ENCODE measurements at regions of chr10 and their contacts with region 1.

Region 1: GRCh38 chr10:95430231-95430951 is 130.8 kb downstream of the SORBS1 start:
- DNase-seq: peak; percentile 50
- H3K4me3 Mint-ChIP-seq: no peak overlapping the region
- H3K27ac Mint-ChIP-seq: no peak overlapping the region
- H3K4me1 Mint-ChIP-seq: no peaks in the 10 kb centered on the region
- H3K27me3 Mint-ChIP-seq: peaks cover 2% of the 10 kb centered on the region

Region 2: DNA sequence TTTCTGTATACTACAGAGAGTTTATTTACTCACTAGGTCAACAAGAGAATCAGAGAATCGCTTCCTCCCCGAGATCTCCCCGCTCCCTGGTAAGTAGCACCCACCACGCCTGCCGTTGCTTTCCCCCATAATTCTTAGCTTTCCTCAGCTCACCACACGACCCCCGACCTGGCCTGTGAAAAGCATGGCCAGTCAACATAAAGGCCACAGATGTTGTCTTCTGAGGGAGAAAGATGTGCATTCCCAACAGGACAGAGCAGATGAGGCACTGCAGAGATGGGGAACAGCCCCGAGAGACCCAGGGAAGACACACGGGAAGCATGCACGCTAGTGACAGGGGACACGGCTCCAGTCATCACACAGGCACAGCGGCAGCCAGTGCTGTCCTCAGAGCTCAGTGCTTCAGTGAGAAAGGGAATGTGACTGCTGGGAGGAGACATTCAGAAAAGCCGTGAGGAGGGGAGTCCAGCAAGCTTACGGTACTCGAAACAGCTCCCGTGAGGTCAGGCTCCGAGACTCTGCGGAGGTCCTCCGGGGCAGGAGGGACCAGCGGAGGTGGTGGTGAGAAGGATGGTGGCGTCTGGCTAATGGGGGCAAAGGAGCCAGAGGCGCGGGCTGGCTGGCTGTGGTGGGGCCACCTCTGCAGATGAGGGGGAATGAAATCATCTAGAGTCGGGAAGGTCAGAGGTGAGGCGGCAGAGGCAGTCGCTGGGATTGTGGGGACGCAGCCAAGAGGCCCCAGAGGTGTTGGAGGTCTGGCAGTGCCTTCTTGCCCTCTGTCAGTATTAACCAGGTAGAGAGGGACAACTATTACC is 16.2 kb before region 1 on chr10:
- CTCF ChIA-PET with region 1: interaction called, 16 read pairs
- POLR2A ChIA-PET with region 1: no interaction called
- DNase-seq: no peak
- H3K4me3 Mint-ChIP-seq: no peak overlapping the region
- H3K27ac Mint-ChIP-seq: no peak overlapping the region
- H3K4me1 Mint-ChIP-seq: no peaks in the 10 kb centered on the region
- H3K27me3 Mint-ChIP-seq: peaks cover 5% of the 10 kb centered on the region

Region 3: GRCh38 chr10:95419399-95419798 is 11.0 kb before region 1 on chr10:
- CTCF ChIA-PET with region 1: interaction called, 16 read pairs
- POLR2A ChIA-PET with region 1: no interaction called
- DNase-seq: no peak
- H3K4me3 Mint-ChIP-seq: no peak overlapping the region
- H3K27ac Mint-ChIP-seq: no peak overlapping the region
- H3K4me1 Mint-ChIP-seq: no peaks in the 10 kb centered on the region
- H3K27me3 Mint-ChIP-seq: peaks cover 5% of the 10 kb centered on the region

Region 4: GRCh38 chr10:95440756-95441546 is 10.6 kb after region 1 on chr10:
- CTCF ChIA-PET with region 1: interaction called, 45 read pairs
- POLR2A ChIA-PET with region 1: interaction called, 3 read pairs
- DNase-seq: peak; percentile 49
- H3K4me3 Mint-ChIP-seq: no peak overlapping the region
- H3K27ac Mint-ChIP-seq: no peak overlapping the region
- H3K4me1 Mint-ChIP-seq: peaks cover 13% of the 10 kb centered on the region
- H3K27me3 Mint-ChIP-seq: peaks cover 17% of the 10 kb centered on the region

Region 5: GRCh38 chr10:95445837-95446486 is 15.6 kb after region 1 on chr10:
- CTCF ChIA-PET with region 1: interaction called, 45 read pairs
- POLR2A ChIA-PET with region 1: interaction called, 3 read pairs
- DNase-seq: peak; percentile 29
- H3K4me3 Mint-ChIP-seq: no peak overlapping the region
- H3K27ac Mint-ChIP-seq: no peak overlapping the region
- H3K4me1 Mint-ChIP-seq: peaks cover 8% of the 10 kb centered on the region
- H3K27me3 Mint-ChIP-seq: peaks cover 18% of the 10 kb centered on the region

Region 6: GRCh38 chr10:95474228-95475002 is 44.0 kb after region 1 on chr10:
- CTCF ChIA-PET with region 1: no interaction called
- POLR2A ChIA-PET with region 1: no interaction called
- DNase-seq: no peak
- H3K4me3 Mint-ChIP-seq: no peak overlapping the region
- H3K27ac Mint-ChIP-seq: no peak overlapping the region
- H3K4me1 Mint-ChIP-seq: no peaks in the 10 kb centered on the region
- H3K27me3 Mint-ChIP-seq: peaks cover 2% of the 10 kb centered on the region

Region 7: DNA sequence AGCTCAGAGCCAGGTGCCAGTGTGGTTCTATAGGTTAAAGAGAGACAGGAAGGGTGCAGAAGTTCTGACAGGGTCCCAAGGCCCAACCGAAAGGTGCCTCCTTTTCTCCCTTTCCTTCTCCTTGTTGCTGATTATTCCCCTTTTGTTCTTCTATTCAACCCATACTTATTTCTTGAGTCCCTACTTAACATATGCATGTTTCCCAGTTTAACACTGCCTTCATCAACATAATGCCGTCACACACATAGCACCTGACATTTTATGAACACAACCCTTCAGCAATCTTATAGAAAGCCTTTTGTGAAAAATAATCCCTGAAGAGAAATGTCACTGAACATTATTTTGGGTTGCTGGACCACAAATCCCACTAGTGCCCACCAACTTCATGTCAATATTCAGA is 91.7 kb after region 1 on chr10:
- CTCF ChIA-PET with region 1: no interaction called
- POLR2A ChIA-PET with region 1: no interaction called
- DNase-seq: no peak
- H3K4me3 Mint-ChIP-seq: no peak overlapping the region
- H3K27ac Mint-ChIP-seq: no peak overlapping the region
- H3K4me1 Mint-ChIP-seq: no peaks in the 10 kb centered on the region
- H3K27me3 Mint-ChIP-seq: no peaks in the 10 kb centered on the region

Region 8: GRCh38 chr10:95601116-95601719 is 170.8 kb after region 1 on chr10:
- CTCF ChIA-PET with region 1: interaction called, 35 read pairs
- POLR2A ChIA-PET with region 1: no interaction called
- DNase-seq: peak; percentile 47
- H3K4me3 Mint-ChIP-seq: no peak overlapping the region
- H3K27ac Mint-ChIP-seq: no peak overlapping the region
- H3K4me1 Mint-ChIP-seq: no peaks in the 10 kb centered on the region
- H3K27me3 Mint-ChIP-seq: peaks cover 6% of the 10 kb centered on the region